T-cell (primary cell): ENCODE measurements at regions of chr9 and their contacts with region 1.

Region 1: GRCh38 chr9:124861342-124862229 is at the starts of genes ARPC5L and RPL35:
- DNase-seq: peak; percentile 87 to 97 (median 94)
- ATAC-seq: peak; percentile 92 to 98 (median 96)
- H3K4me3 ChIP-seq: peak within 1 kb of the TSS; percentile 76 to 86
- H3K4me3 Mint-ChIP-seq: peak within 1 kb of the TSS; percentile 90 to 93 (median 92)
- H3K27ac ChIP-seq: peak within 1 kb of the TSS; percentile 92
- H3K27ac Mint-ChIP-seq: peak within 1 kb of the TSS; percentile 94 to 98
- H3K4me1 ChIP-seq: peaks cover 11 to 41% of the 10 kb centered on the region in 2 experiments
- H3K4me1 Mint-ChIP-seq: peaks cover 15 to 38% (median 33%) of the 10 kb centered on the region in 3 donors
- H3K27me3 ChIP-seq: no peaks in the 10 kb centered on the region
- H3K27me3 Mint-ChIP-seq: no peaks in the 10 kb centered on the region
- total RNA-seq, gene ARPC5L: 29.1 to 55.3 (median 35.9) TPM
- total RNA-seq, gene RPL35: 1,564 to 1,845 (median 1,785) TPM

Region 2: DNA sequence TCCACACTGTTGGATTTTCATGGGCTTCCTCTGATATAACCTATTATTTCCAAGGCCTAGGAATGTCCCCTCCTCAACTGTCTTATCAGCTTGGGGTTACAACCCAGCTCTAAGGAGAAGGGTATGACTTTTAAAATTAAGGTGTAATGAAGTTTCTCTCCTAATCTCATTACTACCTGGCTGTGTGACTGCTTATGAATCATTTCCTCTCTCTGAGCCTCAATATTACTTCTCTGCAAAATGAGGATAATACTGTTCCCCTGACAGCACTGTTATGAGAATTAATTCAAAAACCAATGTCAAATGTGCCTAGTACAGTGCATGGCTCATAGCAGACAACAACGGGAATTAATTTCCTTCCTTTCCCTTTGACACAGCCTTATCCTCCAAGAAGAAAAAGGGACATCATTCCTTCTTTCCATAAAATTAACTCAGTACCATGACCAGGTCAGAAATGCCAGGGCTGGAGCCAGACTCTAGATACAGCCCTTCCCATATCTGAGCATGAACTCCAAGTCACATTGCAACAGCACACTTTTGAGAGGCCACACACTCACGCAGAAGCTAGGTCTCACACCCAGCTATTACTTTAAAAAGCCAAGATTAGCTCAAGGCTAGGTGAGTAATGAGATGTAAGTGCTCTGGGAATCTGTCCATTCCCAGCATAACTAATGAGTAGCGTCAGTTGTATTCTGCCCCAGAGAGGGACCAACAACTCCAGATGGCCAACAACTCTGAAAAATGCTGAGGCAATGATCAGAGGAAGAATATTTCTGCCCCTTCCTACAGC is 209.2 kb before region 1 on chr9:
- CTCF ChIA-PET with region 1: no interaction called
- POLR2A ChIA-PET with region 1: no interaction called
- DNase-seq: no peak
- ATAC-seq: no peak
- H3K4me3 ChIP-seq: no peak overlapping the region
- H3K4me3 Mint-ChIP-seq: no peak overlapping the region
- H3K27ac ChIP-seq: no peak overlapping the region
- H3K27ac Mint-ChIP-seq: no peak overlapping the region
- H3K4me1 ChIP-seq: no peaks in the 10 kb centered on the region
- H3K4me1 Mint-ChIP-seq: peaks cover 0 to 2% (median 0%) of the 10 kb centered on the region in 3 donors
- H3K27me3 ChIP-seq: no peaks in the 10 kb centered on the region
- H3K27me3 Mint-ChIP-seq: no peaks in the 10 kb centered on the region

Region 3: DNA sequence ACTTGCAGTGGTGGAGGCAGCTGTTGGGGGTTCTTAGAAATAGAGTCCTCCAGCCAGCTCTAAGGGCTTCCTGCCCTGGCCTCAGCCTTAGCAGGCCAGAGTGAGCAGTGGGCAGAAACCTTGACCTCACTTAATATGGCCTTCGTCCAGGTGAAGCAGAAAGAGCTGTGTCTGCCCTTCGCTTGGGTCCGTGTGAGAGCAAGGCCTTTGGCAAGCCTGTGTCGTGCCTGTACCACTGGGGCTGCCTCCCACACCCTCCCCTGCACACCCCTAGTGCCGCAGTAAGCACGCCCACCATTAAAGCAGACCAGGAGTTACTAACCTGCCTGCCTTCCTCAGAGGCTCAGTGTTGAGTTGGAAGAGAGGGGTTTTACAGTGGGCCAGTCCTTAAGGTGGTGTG is 13.9 kb after region 1 on chr9:
- CTCF ChIA-PET with region 1: interaction called in 1 of 2 experiments, 10 read pairs
- POLR2A ChIA-PET with region 1: interaction called in 1 of 2 experiments, 17 read pairs
- DNase-seq: no peak
- ATAC-seq: no peak
- H3K4me3 ChIP-seq: no peak overlapping the region
- H3K4me3 Mint-ChIP-seq: no peak overlapping the region
- H3K27ac ChIP-seq: no peak overlapping the region
- H3K27ac Mint-ChIP-seq: no peak overlapping the region
- H3K4me1 ChIP-seq: peaks cover 14 to 55% of the 10 kb centered on the region in 2 experiments
- H3K4me1 Mint-ChIP-seq: peaks cover 36 to 51% (median 46%) of the 10 kb centered on the region in 3 donors
- H3K27me3 ChIP-seq: no peaks in the 10 kb centered on the region
- H3K27me3 Mint-ChIP-seq: no peaks in the 10 kb centered on the region

Region 4: GRCh38 chr9:126578029-126578428 is 1716.4 kb after region 1 on chr9:
- CTCF ChIA-PET with region 1: interaction called in 1 of 2 experiments, 11 read pairs
- POLR2A ChIA-PET with region 1: no interaction called
- DNase-seq: no peak
- ATAC-seq: no peak
- H3K4me3 ChIP-seq: no peak overlapping the region
- H3K4me3 Mint-ChIP-seq: no peak overlapping the region
- H3K27ac ChIP-seq: no peak overlapping the region
- H3K27ac Mint-ChIP-seq: no peak overlapping the region
- H3K4me1 ChIP-seq: no peaks in the 10 kb centered on the region
- H3K4me1 Mint-ChIP-seq: no peaks in the 10 kb centered on the region
- H3K27me3 ChIP-seq: peaks cover 3 to 34% of the 10 kb centered on the region in 2 experiments
- H3K27me3 Mint-ChIP-seq: peaks cover 24 to 40% of the 10 kb centered on the region in 2 donors